ENCODE measurements at regions of chrX and their contacts with region 1.

Region 1: GRCh38 chrX:43969504-43970501 is 3.4 kb downstream of the NDP start:
- DNase-seq: no peak
- H3K4me3 ChIP-seq: no peak overlapping the region
- H3K27ac ChIP-seq: no peak overlapping the region
- H3K4me1 ChIP-seq: peaks cover 22% of the 10 kb centered on the region
- H3K27me3 ChIP-seq: no peaks in the 10 kb centered on the region
- CTCF ChIP-seq: no peak

Region 2: DNA sequence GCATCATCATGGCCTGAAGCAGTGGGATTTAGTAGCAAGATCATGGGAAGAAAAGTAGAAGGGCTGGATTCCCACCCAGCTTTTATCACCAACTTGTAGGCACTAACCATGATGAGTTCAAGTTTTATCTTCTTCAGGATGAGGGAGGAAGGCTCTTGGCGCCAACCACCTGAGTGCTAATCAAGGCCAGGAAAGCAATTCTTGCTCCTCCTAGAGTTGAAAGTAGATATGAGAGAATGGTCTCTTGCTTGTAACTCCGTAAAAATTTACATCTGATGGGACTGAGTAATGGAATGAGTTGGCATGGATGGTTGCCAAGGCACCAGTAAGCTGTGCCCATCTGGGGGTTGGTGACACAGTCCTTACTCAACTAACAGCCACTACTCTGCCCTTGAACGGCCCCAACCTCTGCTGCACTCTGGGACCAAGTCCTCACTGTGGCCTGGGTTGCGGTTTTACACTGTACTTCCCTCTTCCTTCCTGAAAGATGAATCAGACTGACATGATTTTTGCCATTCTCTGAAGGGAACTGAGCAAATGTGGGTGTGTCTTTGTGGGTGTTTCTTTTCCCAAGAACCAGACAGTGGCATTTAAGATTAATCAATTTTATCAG is 42.8 kb after region 1 on chrX:
- CTCF ChIA-PET with region 1: no interaction called
- dilution Hi-C with region 1: no loop called
- in situ Hi-C with region 1: no loop called
- intact Hi-C with region 1: loop called (anchors 5 kb)
- DNase-seq: peak; percentile 93
- H3K4me3 ChIP-seq: no peak overlapping the region
- H3K27ac ChIP-seq: peak overlapping the region; percentile 14
- H3K4me1 ChIP-seq: peaks cover 18% of the 10 kb centered on the region
- H3K27me3 ChIP-seq: no peaks in the 10 kb centered on the region
- CTCF ChIP-seq: peak in 1 of 2 donors; percentile 22